Transverse colon (tissue), 4 donors: ENCODE measurements at regions of chr4 and their contacts with region 1.

Region 1: DNA sequence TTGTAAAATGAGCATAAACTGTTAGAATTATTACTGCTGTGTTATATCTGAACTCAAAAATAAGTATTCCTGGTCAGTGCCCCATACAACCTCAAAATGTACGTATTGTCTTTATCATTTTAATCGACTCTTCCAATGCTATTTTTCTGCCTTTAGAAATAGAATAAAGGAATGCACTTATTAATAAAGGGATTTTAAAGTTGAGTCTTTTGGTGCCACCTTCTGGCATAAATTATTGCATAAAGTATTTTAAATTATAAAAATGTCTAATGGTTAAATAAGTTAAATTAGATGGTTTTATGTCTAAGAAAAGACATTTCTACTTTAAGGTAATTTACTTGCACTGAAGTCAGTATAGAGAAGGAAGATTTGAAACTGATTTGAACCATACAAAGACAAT is 424.0 kb upstream of the NDST4 start:
- DNase-seq: no peak
- H3K4me3 ChIP-seq: no peak overlapping the region
- H3K27ac ChIP-seq: no peak overlapping the region
- H3K4me1 ChIP-seq: no peaks in the 10 kb centered on the region
- H3K27me3 ChIP-seq: no peaks in the 10 kb centered on the region
- CTCF ChIP-seq: peak in 3 of 5 experiments; percentile 9 to 27 (median 14)
- EP300 ChIP-seq: no peak
- POLR2A ChIP-seq: no peak

Region 2: GRCh38 chr4:115090483-115091075 is 446.8 kb before region 1 on chr4:
- in situ Hi-C with region 1: loop called in 1 of 4 experiments (anchors 25 kb)
- intact Hi-C with region 1: no loop called
- DNase-seq: no peak
- H3K4me3 ChIP-seq: no peak overlapping the region
- H3K27ac ChIP-seq: no peak overlapping the region
- H3K4me1 ChIP-seq: no peaks in the 10 kb centered on the region
- H3K27me3 ChIP-seq: no peaks in the 10 kb centered on the region
- CTCF ChIP-seq: peak; percentile 43 to 61 (median 46)
- EP300 ChIP-seq: no peak
- POLR2A ChIP-seq: no peak

Region 3: DNA sequence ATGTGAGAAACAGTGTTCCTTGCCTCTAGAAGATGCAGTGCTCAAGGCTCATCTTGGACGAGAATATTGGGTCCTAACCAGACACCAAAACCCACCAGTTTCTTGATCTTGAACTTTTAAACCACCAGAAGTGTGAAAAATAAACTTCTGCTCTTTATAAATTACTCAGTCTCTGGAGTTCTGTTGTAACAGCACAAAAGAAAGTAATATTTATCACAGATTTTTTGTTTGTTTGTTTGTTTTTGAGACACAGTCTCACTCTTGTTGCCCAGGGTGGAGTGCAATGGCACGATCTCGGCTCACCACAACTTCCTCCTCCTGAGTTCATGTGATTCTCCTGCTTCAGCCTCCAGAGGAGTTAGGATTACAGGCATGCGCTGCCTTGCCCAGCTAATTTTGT is 52.9 kb before region 1 on chr4:
- in situ Hi-C with region 1: no loop called
- intact Hi-C with region 1: no loop called
- DNase-seq: no peak
- H3K4me3 ChIP-seq: no peak overlapping the region
- H3K27ac ChIP-seq: no peak overlapping the region
- H3K4me1 ChIP-seq: no peaks in the 10 kb centered on the region
- H3K27me3 ChIP-seq: no peaks in the 10 kb centered on the region
- CTCF ChIP-seq: no peak
- EP300 ChIP-seq: no peak
- POLR2A ChIP-seq: no peak